Dendritic cell treated with granulocyte-macrophage colony-stimulating factor and Interleukin-4, amounts not matched to agents 40 ng/mL and 50 ng/mL, for 4 days (primary cell): ENCODE measurements at regions of chr10 and their contacts with region 1.

Region 1: DNA sequence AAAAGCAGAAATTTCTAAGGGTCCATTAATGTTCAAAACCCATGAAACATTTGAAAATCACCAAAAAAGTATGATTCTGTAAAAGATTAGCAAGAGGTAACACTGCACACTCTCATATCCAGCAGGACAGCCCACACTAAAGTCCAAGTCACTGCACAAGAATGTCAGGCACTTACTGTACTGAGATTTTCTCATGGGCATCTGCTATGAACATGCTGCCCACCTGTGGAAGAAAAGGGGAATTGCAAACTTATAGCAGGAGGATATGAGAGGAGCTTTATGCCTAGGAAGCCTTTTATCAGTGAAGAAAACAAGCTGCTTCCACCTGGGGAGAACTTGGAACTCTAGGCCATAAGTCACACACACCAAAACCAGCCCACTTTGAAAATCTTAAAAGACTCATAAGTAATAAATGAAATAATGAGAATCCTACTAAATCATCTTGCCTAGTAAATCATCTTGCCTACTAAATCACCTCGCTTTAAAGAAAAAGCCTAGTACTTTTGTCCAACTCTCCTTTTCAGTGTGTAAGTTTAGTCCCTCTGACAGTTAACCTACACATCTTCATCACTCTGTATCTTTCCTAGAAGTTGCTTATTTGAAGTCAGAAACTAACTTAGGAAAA is 46.1 kb downstream of the ARMH3 start:
- H3K4me3 Mint-ChIP-seq: no peak overlapping the region
- H3K27ac Mint-ChIP-seq: no peak overlapping the region
- H3K4me1 Mint-ChIP-seq: peaks cover 55% of the 10 kb centered on the region
- H3K27me3 Mint-ChIP-seq: no peaks in the 10 kb centered on the region

Region 2: DNA sequence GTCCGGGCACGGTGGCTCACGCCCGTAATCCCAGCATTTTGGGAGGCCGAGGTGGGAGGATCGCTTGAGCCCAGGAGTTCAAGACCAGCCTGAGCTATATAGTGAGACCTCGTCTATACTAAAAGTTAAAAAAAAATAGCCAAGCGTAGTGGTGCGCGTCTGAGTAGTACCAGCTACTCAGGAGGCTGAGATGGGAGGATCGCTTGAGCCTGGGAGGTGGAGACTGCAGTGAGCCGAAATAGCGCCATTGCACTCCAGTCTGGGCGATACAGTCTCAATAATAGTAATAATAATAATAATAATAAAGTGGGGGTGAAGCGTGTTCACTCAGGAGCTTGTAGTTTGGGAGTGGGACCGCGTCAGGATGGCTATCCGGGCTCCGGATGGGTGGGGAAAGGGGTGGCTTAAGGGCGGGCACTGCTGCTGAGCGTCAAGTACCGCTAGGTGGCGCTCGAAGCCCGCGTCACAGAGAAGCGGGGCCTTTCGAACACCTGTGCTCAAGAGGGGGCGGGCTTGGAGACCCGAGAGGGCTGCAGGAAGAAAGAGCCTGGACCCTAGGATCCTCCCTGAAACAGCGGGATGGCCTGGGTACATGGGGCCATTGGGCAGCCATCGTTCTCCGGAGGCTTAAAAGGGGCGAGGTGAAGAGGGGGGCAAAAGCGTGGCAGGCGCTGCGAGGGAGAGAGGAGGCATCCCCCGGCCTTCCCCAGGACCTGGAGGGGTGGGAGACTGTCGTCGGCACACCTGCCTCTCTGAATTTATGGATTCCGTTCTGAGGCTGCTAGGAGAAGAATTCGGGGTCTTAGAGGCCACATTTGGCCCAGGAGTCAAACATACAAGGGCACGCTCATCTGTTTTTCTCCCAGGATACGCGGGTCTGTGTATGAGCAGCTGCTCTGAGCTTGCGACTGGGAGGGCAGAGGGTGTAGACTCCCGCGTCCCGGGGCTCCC is 795.2 kb before region 1 on chr10:
- intact Hi-C with region 1: no loop called
- H3K4me3 Mint-ChIP-seq: peak overlapping the region; percentile 59
- H3K27ac Mint-ChIP-seq: no peak overlapping the region
- H3K4me1 Mint-ChIP-seq: peaks cover 28% of the 10 kb centered on the region
- H3K27me3 Mint-ChIP-seq: peaks cover 96% of the 10 kb centered on the region

Region 3: DNA sequence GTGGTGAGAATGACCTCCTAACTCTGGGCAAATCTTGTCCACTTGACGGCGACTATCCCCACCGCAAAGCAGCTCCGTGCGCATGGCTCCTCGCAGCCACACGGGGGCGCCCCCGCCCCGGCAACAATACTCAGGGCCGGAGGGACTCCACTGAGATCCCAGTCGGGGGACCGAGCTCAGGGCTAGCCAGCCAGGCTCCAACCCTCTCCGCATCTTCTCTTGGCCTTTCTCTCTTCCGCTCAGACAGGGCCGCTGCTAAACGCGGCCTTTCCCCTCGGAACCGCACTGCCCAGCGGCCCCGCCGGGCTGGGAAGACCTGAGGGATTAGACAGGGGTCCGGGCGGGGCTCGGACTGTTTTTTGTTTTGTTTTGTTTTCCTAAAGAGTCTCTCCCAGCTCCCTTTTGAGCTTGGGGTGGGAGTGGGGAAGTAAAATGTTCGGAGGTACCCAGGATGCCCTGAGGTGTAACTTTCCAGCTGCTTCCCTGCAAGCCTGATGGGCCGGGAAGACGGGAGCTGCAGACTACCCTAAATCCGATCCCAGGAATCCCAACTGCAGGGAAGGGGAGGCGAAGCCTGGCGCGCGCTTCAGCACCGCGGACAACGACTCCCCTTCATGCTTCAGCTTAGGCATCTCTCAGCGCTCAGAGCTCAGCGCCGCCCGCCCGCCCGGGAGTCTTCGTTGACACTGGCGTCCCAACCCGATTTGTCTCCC is 169.0 kb before region 1 on chr10:
- intact Hi-C with region 1: loop called (anchors 5 kb)
- H3K4me3 Mint-ChIP-seq: peak overlapping the region; percentile 69
- H3K27ac Mint-ChIP-seq: no peak overlapping the region
- H3K4me1 Mint-ChIP-seq: peaks cover 57% of the 10 kb centered on the region
- H3K27me3 Mint-ChIP-seq: peaks cover 32% of the 10 kb centered on the region

Region 4: DNA sequence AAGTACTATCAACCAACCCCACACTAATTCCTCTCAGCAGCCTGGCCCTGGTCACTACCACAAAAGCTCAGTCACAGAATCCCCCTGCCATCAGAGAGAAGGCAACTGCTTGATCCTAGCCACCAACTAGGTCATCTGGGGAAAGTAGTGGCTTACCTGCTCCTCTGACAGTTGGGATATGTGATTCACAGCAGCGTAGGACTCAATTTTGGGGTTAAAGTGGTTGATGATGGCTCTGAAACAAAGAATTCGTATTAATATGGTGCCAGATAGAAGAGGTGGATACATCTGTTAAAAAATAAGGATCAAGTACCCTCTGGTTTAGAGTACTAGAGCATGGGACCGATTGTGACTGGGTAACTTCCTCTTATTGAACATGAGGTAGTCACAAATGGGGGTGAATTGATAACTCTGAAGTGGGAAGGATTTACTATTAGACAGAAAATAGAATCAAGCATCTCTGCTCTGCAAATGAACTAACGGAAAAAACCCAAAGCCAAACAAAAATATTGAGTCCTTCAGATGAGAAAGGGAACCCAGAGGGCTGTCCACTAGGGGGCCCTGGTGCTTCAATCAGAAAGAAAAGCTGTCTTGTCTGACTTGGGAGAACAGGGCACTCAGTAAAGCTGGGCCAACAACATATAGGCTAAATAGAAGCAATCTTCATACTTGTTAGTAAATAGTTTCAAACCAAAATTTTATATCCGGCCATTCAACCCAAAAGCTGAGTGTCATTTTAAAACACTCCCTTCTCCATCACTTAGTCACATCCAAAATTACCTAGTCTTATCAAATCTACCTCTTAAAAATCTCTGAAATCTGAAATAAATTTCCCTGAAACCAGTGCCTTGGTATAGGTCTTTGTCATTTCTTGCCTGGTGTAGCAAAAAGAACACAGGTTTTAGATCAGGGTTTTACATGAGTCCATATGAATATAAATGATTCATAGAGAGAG is 120.4 kb before region 1 on chr10:
- intact Hi-C with region 1: loop called (anchors 1 kb)
- H3K4me3 Mint-ChIP-seq: no peak overlapping the region
- H3K27ac Mint-ChIP-seq: no peak overlapping the region
- H3K4me1 Mint-ChIP-seq: peaks cover 25% of the 10 kb centered on the region
- H3K27me3 Mint-ChIP-seq: no peaks in the 10 kb centered on the region

Region 5: DNA sequence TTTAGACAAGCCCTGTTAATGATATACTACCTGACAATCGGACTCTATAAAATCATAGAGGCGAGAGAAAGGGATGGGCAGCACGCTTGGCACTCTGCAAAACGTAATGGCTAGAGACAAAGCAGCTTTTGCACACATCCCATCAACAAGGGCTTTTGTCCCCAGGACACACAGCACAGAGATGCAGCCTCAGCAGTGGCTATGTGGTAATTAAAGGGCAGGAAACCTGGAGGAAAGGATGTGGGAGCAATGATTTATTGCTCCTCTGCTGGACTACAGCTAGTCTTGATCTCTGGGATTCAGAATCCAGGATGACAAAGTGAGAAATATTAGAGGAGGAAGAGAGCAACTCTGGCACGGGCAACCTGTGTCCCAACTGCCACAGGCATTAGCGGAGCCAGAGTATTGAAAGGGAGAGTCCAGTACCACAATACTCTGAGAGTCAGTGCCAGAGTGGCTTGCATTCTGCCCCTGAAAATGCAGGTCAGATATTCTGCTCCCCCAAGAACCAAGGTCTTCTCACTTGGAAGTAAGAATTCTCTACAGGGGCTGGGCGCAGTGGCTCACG is 50.5 kb before region 1 on chr10:
- intact Hi-C with region 1: loop called (anchors 10 kb)
- H3K4me3 Mint-ChIP-seq: no peak overlapping the region
- H3K27ac Mint-ChIP-seq: peak overlapping the region; percentile 47
- H3K4me1 Mint-ChIP-seq: no peaks in the 10 kb centered on the region
- H3K27me3 Mint-ChIP-seq: no peaks in the 10 kb centered on the region

Region 6: DNA sequence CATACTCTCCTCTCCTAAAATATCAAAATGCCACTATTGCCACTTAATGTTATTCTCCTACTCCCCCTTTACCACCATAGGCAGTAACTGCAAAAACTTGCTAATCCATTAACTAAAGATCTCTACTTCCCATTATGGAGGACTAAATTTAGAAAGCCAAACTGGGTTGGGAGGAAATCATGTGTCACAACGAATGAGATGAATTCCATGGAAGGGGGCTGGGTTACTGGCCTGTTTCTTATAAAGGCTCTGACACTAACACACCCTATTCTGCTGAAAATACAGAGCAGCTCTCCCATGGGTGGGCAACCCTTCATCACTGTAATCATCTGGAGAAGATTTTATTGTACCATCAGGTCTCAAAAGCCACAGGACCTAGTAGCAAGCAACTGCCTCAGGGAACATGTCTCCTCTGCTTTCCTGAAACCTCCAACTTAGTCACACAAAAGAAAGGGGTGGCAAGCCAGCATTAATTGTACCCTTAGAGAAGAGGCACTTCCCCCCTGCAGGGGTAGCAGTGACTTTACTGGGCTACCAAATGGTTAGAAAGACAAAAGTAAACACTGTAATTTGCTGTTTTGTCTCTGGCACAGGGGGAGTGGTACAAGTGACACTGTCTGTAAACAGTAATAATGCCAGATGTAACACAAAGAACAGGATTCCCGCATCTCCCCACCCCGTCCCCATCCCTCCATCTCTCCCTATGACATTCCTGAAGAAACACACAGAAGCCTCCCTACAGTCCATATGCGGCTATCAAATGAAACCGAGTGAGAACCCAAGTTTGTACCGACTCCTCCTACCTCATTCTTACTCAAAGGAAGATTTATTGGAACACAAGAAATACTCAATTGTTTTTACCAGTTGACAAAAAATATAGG is 35.6 kb before region 1 on chr10:
- intact Hi-C with region 1: loop called (anchors 5 kb)
- H3K4me3 Mint-ChIP-seq: peak overlapping the region; percentile 74
- H3K27ac Mint-ChIP-seq: peak overlapping the region; percentile 90
- H3K4me1 Mint-ChIP-seq: peaks cover 62% of the 10 kb centered on the region
- H3K27me3 Mint-ChIP-seq: no peaks in the 10 kb centered on the region

Region 7: DNA sequence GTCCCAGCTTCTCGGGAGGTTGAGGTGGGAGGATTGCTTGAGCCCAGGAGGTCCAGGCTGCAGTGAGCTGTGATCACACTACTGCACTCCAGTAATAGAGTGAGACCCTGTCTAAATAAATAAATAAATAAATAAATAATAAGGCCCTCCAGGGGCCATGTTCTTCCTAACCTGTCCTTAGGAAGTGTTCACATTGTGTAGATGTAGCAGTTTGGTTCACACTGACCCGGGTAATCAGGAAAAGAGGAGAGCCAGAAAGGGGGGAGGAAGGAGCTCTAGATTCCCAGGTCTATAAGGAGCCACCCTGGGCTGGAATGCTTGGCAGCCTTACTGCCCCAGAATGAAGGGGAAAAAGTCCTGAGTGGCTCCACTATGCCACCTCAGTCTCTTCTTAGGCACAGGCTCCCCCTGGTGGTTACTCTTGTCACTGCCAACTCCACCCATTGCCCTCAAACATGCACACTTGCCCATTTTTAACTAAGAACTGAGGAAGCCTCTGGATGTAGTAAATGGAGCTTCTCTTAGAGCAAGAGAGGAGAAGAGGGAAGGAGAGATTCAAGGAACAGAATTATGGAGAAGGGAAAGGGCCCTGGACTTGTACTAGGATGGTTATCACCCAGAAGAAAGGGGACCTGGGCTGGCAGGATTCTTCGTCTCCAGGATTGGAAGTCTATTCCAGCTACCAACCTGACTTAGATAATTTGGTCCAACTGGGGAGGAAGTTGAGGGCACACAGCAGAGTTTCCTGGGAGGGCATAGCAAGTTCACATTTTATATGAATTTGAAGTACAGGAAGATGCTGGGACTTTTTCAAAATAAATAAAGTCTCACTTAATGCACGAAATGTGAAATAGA is 63.0 kb after region 1 on chr10:
- intact Hi-C with region 1: loop called (anchors 5 kb)
- H3K4me3 Mint-ChIP-seq: no peak overlapping the region
- H3K27ac Mint-ChIP-seq: no peak overlapping the region
- H3K4me1 Mint-ChIP-seq: peaks cover 32% of the 10 kb centered on the region
- H3K27me3 Mint-ChIP-seq: peaks cover 2% of the 10 kb centered on the region